Caco-2 (cell line): ENCODE measurements at regions of chr5 and their contacts with region 1.

Region 1: GRCh38 chr5:15013654-15014463 is 142.3 kb upstream of the ANKH start:
- DNase-seq: peak in 1 of 2 experiments; percentile 66
- H3K4me3 ChIP-seq: no peak overlapping the region
- H3K4me3 Mint-ChIP-seq: no peak overlapping the region
- H3K27ac Mint-ChIP-seq: no peak overlapping the region
- H3K4me1 ChIP-seq: peaks cover 33% of the 10 kb centered on the region
- H3K4me1 Mint-ChIP-seq: peaks cover 24% of the 10 kb centered on the region
- H3K27me3 ChIP-seq: no peaks in the 10 kb centered on the region
- H3K27me3 Mint-ChIP-seq: no peaks in the 10 kb centered on the region
- CTCF ChIP-seq: peak; percentile 60 to 61

Region 2: DNA sequence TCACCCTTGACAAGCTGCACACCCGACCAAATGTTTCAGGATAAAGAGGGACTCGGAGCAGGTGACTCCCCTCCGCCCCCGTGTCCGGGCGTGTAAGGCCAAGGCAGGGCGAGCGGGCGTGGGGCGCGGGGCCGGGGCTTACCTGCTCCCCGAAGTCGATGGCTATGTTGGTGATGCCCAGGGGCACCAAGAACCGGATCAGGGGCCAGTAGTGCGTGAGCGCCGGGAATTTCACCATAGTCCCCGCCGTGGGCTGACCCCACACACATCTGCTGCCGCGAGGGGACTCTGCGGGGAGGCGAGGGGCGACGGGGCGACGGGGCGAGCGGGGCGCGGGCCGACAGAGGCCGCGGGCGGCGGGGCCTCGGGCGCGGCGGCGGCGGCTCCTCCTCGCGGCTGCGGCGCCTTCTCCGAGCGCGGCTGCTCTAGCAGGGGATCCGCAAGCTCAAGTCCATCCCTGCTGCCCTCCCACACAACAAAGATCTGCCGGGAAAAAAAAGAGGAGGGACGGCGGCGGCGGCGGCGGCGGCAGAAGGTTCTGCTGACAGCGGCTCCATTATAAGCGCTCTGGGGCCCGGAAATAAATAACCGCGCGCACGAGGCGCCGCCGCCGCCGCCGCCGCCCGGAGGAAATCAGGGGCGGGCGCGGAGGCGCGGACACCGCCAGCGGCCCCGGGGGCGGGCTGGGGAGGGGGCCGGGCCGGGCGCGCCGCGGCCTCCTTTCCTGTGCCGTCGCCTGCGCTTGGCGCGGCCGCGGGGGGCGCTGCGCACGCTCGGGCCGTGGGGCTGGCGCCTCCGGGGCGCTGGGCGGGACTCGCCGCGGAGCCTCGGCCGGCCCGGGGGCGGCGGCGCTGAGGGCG is 142.4 kb before region 1 on chr5 and contains the start of gene ANKH:
- CTCF ChIA-PET with region 1: no interaction called
- POLR2A ChIA-PET with region 1: no interaction called
- intact Hi-C with region 1: loop called (anchors 1 kb)
- DNase-seq: peak; percentile 61 to 86
- H3K4me3 ChIP-seq: peak within 1 kb of the TSS; percentile 67
- H3K4me3 Mint-ChIP-seq: peak within 1 kb of the TSS; percentile 70
- H3K27ac Mint-ChIP-seq: no peak within 1 kb of the TSS
- H3K4me1 ChIP-seq: no peaks in the 10 kb centered on the region
- H3K4me1 Mint-ChIP-seq: peaks cover 13% of the 10 kb centered on the region
- H3K27me3 ChIP-seq: peaks cover 2% of the 10 kb centered on the region
- H3K27me3 Mint-ChIP-seq: peaks cover 19% of the 10 kb centered on the region
- CTCF ChIP-seq: peak in 1 of 2 experiments; percentile 16
- total RNA-seq, gene ANKH: 4.7 and 6.3 TPM in 2 replicates

Region 3: GRCh38 chr5:14946815-14947640 is 66.8 kb before region 1 on chr5:
- CTCF ChIA-PET with region 1: no interaction called
- POLR2A ChIA-PET with region 1: no interaction called
- intact Hi-C with region 1: loop called (anchors 1 kb)
- DNase-seq: peak in 1 of 2 experiments; percentile 43
- H3K4me3 ChIP-seq: no peak overlapping the region
- H3K4me3 Mint-ChIP-seq: no peak overlapping the region
- H3K27ac Mint-ChIP-seq: no peak overlapping the region
- H3K4me1 ChIP-seq: no peaks in the 10 kb centered on the region
- H3K4me1 Mint-ChIP-seq: no peaks in the 10 kb centered on the region
- H3K27me3 ChIP-seq: no peaks in the 10 kb centered on the region
- H3K27me3 Mint-ChIP-seq: no peaks in the 10 kb centered on the region
- CTCF ChIP-seq: peak; percentile 48 to 63

Region 4: GRCh38 chr5:14958196-14958595 is 55.7 kb before region 1 on chr5:
- CTCF ChIA-PET with region 1: interaction called, 11 read pairs
- POLR2A ChIA-PET with region 1: no interaction called
- intact Hi-C with region 1: loop called (anchors 1 kb)
- DNase-seq: no peak
- H3K4me3 ChIP-seq: no peak overlapping the region
- H3K4me3 Mint-ChIP-seq: no peak overlapping the region
- H3K27ac Mint-ChIP-seq: no peak overlapping the region
- H3K4me1 ChIP-seq: no peaks in the 10 kb centered on the region
- H3K4me1 Mint-ChIP-seq: no peaks in the 10 kb centered on the region
- H3K27me3 ChIP-seq: no peaks in the 10 kb centered on the region
- H3K27me3 Mint-ChIP-seq: peaks cover 3% of the 10 kb centered on the region
- CTCF ChIP-seq: no peak